Activated naive CD4-positive, alpha-beta T cell treated with anti-CD3 and anti-CD28 coated beads for 36 hours (primary cell): ENCODE measurements at regions of chr12 and their contacts with region 1.

Region 1: GRCh38 chr12:66929121-66929520 is 250.2 kb upstream of the GRIP1 start:
- DNase-seq: peak; percentile 58
- H3K4me3 Mint-ChIP-seq: no peak overlapping the region
- H3K27ac Mint-ChIP-seq: no peak overlapping the region
- H3K4me1 Mint-ChIP-seq: peaks cover 17% of the 10 kb centered on the region
- H3K27me3 Mint-ChIP-seq: no peaks in the 10 kb centered on the region

Region 2: GRCh38 chr12:66739933-66740648 is 189.0 kb before region 1 on chr12:
- CTCF ChIA-PET with region 1: no interaction called
- intact Hi-C with region 1: no loop called
- DNase-seq: no peak
- H3K4me3 Mint-ChIP-seq: no peak overlapping the region
- H3K27ac Mint-ChIP-seq: no peak overlapping the region
- H3K4me1 Mint-ChIP-seq: peaks cover 30% of the 10 kb centered on the region
- H3K27me3 Mint-ChIP-seq: no peaks in the 10 kb centered on the region

Region 3: GRCh38 chr12:66910366-66910974 is 18.7 kb before region 1 on chr12:
- CTCF ChIA-PET with region 1: interaction called, 3 read pairs
- intact Hi-C with region 1: loop called (anchors 1 kb)
- DNase-seq: no peak
- H3K4me3 Mint-ChIP-seq: no peak overlapping the region
- H3K27ac Mint-ChIP-seq: no peak overlapping the region
- H3K4me1 Mint-ChIP-seq: peaks cover 21% of the 10 kb centered on the region
- H3K27me3 Mint-ChIP-seq: no peaks in the 10 kb centered on the region

Region 4: GRCh38 chr12:66947119-66947518 is 18.0 kb after region 1 on chr12:
- CTCF ChIA-PET with region 1: no interaction called
- intact Hi-C with region 1: loop called (anchors 1 kb)
- DNase-seq: peak; percentile 5
- H3K4me3 Mint-ChIP-seq: no peak overlapping the region
- H3K27ac Mint-ChIP-seq: no peak overlapping the region
- H3K4me1 Mint-ChIP-seq: peaks cover 22% of the 10 kb centered on the region
- H3K27me3 Mint-ChIP-seq: no peaks in the 10 kb centered on the region